ENCODE measurements at regions of chr7 and their contacts with region 1.

Region 1: DNA sequence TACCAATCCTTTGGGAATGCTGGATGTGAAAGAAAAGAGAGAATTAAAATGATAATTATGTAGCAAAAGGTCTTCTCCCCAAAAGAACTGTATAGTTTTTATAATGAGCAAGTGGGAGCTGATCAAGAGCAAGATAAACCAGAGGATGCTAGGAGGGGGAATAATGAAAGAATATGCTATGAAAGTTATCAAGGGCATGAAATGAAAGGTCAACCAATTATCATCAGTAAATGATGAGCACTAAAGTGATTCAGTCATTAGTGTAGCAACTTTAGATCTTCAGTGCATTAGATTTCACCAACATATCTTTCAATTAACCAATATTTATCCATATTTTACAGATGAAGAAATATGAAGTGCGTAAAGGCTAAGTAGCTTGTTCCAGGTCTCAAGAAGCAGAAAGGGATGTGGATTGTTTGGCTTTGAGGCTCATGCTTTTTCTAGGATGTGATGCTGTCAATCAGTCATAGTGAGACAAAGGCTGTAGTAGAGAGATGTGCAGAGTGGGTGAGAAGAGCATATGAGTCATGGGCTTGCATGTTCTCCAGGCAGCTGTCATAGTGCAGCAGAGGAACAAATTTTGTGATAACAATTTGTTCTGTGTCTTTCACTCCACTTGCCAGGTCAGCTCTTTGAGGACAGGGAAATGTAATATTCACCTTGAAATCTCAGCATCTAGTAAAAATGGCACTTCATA is 5.7 kb upstream of the OR2F2 start:
- DNase-seq: no peak
- ATAC-seq: peak; percentile 73; the same call in 2 of the 3 replicates
- H3K4me3 ChIP-seq: no peak overlapping the region
- H3K27ac ChIP-seq: no peak overlapping the region
- H3K4me1 ChIP-seq: no peaks in the 10 kb centered on the region
- H3K27me3 ChIP-seq: peaks cover 0 to 2% of the 10 kb centered on the region in 2 experiments; a peak in 1 of 5 replicates
- CTCF ChIP-seq: no peak
- EP300 ChIP-seq: no peak
- POLR2A ChIP-seq: no peak
- RAD21 ChIP-seq: no peak

Region 2: GRCh38 chr7:143958781-143959180 is 29.4 kb after region 1 on chr7:
- CTCF ChIA-PET with region 1: no interaction called
- POLR2A ChIA-PET with region 1: no interaction called
- in situ Hi-C with region 1: no loop called
- intact Hi-C with region 1: no loop called
- DNase-seq: no peak
- ATAC-seq: no peak
- H3K4me3 ChIP-seq: no peak overlapping the region
- H3K27ac ChIP-seq: no peak overlapping the region
- H3K4me1 ChIP-seq: no peaks in the 10 kb centered on the region
- H3K27me3 ChIP-seq: no peaks in the 10 kb centered on the region
- CTCF ChIP-seq: no peak
- EP300 ChIP-seq: no peak
- POLR2A ChIP-seq: no peak
- RAD21 ChIP-seq: no peak

Region 3: GRCh38 chr7:143974474-143974873 is 45.1 kb after region 1 on chr7:
- CTCF ChIA-PET with region 1: no interaction called
- POLR2A ChIA-PET with region 1: no interaction called
- in situ Hi-C with region 1: no loop called
- intact Hi-C with region 1: loop called (anchors 5 kb)
- DNase-seq: no peak
- ATAC-seq: peak; percentile 18; the same call in 2 of the 3 replicates
- H3K4me3 ChIP-seq: no peak overlapping the region
- H3K27ac ChIP-seq: no peak overlapping the region
- H3K4me1 ChIP-seq: peaks cover 0 to 10% of the 10 kb centered on the region in 2 experiments; a peak in 2 of 5 replicates
- H3K27me3 ChIP-seq: no peaks in the 10 kb centered on the region
- CTCF ChIP-seq: no peak
- EP300 ChIP-seq: no peak
- POLR2A ChIP-seq: no peak
- RAD21 ChIP-seq: no peak

Measured in K562 (cell line).